Transverse colon (tissue), 4 donors: ENCODE measurements at regions of chr19 and their contacts with region 1.

Region 1: DNA sequence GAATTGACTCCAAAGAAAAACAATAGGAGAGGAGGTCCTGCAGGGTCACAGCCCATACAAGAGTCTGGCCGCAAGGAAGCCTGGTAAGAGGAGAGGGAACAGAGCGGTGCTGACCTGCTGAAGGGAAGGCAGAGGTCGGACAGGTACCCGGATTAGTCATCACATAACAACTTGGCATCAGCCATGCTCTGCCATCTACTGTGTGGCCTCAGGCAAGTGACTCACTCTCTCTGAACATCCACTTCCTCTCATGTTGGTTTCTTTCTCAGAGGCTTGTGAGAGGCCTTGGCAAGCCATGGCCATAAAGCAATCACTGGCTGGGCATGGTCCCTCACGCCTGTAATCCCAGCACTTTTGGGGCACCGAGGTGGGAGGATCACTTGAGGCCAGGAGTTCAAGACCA is 7.4 kb upstream of the CAPNS1 start:
- DNase-seq: peak; percentile 39
- H3K4me3 ChIP-seq: no peak overlapping the region
- H3K27ac ChIP-seq: no peak overlapping the region
- H3K4me1 ChIP-seq: peaks cover 5 to 39% (median 31%) of the 10 kb centered on the region in 4 donors
- H3K27me3 ChIP-seq: no peaks in the 10 kb centered on the region
- CTCF ChIP-seq: no peak
- EP300 ChIP-seq: no peak
- POLR2A ChIP-seq: no peak

Region 2: DNA sequence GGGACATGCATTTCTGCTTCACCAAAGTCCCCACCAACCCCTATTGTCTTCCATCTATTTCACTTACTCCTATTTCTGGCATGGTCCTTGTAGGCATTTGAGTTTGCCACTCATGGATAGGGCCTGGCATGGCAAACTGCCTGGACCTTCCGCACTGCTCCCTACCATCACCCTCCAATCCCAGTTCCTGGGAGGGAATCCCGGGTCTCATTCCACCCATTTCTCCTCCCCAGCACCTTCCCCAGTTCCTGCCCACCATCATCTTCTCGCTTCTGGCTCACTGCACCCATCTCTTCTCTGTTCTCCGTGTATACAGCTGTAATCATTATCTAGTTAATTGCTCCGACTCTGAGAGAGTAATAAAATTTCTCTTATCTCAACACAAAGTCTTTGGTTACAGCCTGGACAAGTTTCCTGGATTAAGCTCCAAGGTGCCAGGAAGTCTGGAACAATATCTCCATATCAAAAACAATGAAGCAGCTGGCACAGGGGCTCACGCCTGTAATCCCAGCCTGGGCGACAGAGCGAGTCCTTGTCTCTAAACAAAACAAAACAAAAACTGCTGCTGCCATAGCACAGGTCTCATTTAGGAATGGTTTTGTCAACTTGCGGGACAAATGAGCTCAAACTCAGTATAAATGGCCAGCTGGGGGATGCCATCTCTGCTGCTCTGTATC is 36.7 kb after region 1 on chr19:
- in situ Hi-C with region 1: loop called in 3 of 4 experiments (anchors 5 kb)
- intact Hi-C with region 1: loop called (anchors 1 kb)
- DNase-seq: peak; percentile 57
- H3K4me3 ChIP-seq: no peak overlapping the region
- H3K27ac ChIP-seq: peak overlapping the region; percentile 84 to 89 (median 85)
- H3K4me1 ChIP-seq: peaks cover 0 to 21% (median 16%) of the 10 kb centered on the region in 4 donors
- H3K27me3 ChIP-seq: no peaks in the 10 kb centered on the region
- CTCF ChIP-seq: no peak
- EP300 ChIP-seq: no peak
- POLR2A ChIP-seq: peak; percentile 31

Region 3: DNA sequence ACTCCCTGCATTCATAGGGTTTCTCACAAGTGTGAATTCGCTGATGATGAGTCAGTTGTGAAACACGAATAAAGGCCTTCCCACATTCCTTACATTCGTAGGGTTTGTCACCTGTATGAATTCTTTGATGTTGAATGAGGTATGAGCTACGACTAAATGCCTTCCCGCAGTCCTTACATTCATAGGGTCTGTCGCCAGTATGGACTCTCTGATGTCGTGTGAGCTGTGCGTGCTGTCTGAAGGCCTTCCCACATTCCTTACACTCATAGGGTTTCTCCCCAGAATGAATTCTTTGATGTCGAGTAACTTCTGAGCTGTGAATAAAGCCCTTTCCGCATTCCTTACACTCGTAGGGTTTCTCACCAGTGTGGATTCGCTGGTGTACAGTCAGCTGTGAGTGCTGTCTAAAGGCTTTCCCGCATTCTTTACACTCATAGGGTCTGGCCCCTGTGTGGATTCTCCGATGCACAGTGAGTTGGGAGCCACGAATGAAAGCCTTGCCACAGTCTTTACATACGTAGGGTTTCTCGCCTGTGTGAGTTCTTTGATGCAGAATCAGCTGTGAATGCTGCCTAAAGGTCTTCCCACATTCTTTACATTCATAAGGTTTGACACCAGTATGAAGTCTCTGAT is 50.2 kb after region 1 on chr19:
- in situ Hi-C with region 1: no loop called
- intact Hi-C with region 1: no loop called
- DNase-seq: no peak
- H3K4me3 ChIP-seq: no peak overlapping the region
- H3K27ac ChIP-seq: no peak overlapping the region
- H3K4me1 ChIP-seq: no peaks in the 10 kb centered on the region
- H3K27me3 ChIP-seq: no peaks in the 10 kb centered on the region
- CTCF ChIP-seq: no peak
- EP300 ChIP-seq: no peak
- POLR2A ChIP-seq: no peak